ENCODE measurements at regions of chr14 and their contacts with region 1.

Region 1: DNA sequence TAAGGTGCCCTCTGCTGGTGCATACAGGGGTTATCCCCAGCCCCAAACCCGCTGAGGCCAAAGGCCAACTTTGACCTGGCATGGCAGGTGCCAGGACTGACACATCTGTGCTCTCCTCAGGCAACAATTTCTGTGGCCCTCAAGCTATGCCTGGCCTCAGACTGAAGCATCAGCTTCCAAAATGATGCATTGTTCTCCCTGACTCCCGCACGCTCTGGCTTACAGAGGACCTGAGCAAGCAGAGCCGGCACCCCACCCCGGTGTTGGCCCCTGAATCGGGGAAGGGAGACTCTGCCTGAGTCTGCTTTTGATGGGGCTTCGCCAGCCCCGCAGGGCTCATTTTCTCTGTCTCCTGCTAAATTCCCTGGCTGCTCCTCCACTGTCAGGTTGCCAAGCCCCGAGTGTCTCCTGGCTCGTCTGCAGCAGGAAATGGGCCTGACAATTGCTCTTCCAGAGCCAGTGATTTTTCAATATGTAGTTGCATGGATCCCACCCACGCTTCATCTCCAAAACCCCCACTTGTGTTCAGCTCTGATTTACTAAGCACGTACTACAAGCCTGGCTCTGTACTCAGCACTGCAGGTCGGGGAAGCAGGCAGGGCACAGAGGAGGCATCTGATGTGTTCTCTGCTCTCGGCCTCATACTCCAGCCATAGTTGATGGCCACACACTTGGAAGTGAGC is 126.1 kb downstream of the SLC38A6 start:
- DNase-seq: no peak
- ATAC-seq: no peak
- H3K4me3 ChIP-seq: no peak overlapping the region
- H3K27ac ChIP-seq: peak overlapping the region in 3 of 4 donors; percentile 59 to 66 (median 59)
- H3K4me1 ChIP-seq: peaks cover 61 to 72% of the 10 kb centered on the region in 2 donors
- H3K27me3 ChIP-seq: no peaks in the 10 kb centered on the region
- CTCF ChIP-seq: peak in 4 of 5 experiments; percentile 9 to 36 (median 25)
- POLR2A ChIP-seq: no peak

Region 2: DNA sequence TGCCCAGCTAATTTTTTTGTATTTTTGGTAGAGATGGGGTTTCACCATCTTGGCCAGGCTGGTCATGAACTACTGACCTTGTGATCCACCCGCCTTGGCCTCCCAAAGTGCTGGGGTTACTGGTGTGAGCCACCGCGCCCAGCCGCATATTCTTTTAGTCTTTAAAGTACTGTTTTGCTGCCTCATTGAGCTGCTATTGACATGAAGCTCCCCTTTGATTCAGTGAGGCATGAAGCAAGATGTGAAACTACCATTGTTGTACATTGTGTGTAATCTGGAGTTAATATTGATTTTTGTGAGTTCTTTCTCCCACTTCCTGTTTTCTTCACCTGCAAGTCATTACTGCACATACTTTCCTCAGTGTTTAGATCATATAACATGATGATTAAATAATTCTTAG is 291.7 kb before region 1 on chr14:
- in situ Hi-C with region 1: no loop called
- intact Hi-C with region 1: no loop called
- DNase-seq: no peak
- ATAC-seq: no peak
- H3K4me3 ChIP-seq: no peak overlapping the region
- H3K27ac ChIP-seq: no peak overlapping the region
- H3K4me1 ChIP-seq: peaks cover 10 to 13% of the 10 kb centered on the region in 2 donors
- H3K27me3 ChIP-seq: no peaks in the 10 kb centered on the region
- CTCF ChIP-seq: no peak
- POLR2A ChIP-seq: no peak

Region 3: GRCh38 chr14:61196792-61197191 is 89.7 kb after region 1 on chr14:
- in situ Hi-C with region 1: loop called in 1 of 4 experiments (anchors 10 kb)
- intact Hi-C with region 1: no loop called
- DNase-seq: no peak
- ATAC-seq: peak; percentile 74 to 88
- H3K4me3 ChIP-seq: no peak overlapping the region
- H3K27ac ChIP-seq: peak overlapping the region; percentile 55 to 76 (median 62)
- H3K4me1 ChIP-seq: peaks cover 18 to 33% of the 10 kb centered on the region in 2 donors
- H3K27me3 ChIP-seq: no peaks in the 10 kb centered on the region
- CTCF ChIP-seq: peak in 3 of 5 experiments; percentile 40 to 52 (median 40)
- POLR2A ChIP-seq: no peak